Activated CD8-positive, alpha-beta T cell treated with anti-CD3 and anti-CD28 coated beads for 36 hours (primary cell): ENCODE measurements at regions of chr1 and their contacts with region 1.

Region 1: GRCh38 chr1:148334339-148335130 is 148.6 kb downstream of the PPIAL4G start:
- DNase-seq: peak; percentile 87
- ATAC-seq: peak; percentile 86
- H3K4me3 Mint-ChIP-seq: peak overlapping the region; percentile 85
- H3K27ac Mint-ChIP-seq: peak overlapping the region; percentile 100
- H3K4me1 Mint-ChIP-seq: peaks cover 28% of the 10 kb centered on the region
- H3K27me3 Mint-ChIP-seq: peaks cover 9% of the 10 kb centered on the region
- CTCF ChIP-seq: no peak

Region 2: DNA sequence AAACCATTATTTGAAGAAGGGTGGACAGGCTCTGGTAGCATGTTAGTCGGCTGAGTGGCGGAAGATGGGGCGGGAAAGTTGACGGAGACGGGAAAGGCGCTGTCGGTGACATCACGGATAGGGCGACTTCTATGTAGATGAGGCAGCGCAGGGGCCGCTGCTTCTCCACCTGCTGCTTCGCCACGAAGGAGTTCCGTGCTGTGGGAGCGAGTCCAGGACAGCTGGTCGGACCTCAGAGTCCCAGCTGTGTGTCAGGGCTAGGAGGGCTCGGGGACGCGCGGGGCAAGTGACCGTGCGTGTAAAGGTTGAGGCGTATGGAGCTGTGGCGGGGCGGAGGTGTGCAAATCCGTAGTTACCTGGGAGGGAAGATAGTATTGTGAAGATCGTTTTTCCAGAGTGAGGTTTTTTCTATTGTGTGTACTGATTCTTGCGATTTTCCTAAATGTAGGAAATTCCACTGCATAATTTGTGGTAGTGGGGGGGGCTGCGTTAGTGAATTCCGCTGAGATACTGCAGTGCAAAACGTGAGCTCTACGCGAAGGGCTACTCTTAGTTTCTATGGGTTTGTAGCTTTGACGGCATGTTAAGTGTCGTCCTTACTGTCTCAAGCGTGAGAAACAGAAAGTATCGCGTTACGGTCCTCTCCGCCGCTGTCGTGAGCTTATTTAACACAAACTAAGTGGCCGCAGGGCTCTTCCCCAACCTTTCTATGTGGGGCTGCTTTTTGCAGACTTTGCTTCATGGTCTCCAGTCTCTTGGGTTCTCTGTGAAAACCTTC is 71.2 kb before region 1 on chr1:
- CTCF ChIA-PET with region 1: interaction called, 6 read pairs
- POLR2A ChIA-PET with region 1: interaction called, 141 read pairs
- intact Hi-C with region 1: loop called (anchors 5 kb)
- DNase-seq: peak; percentile 92
- ATAC-seq: peak; percentile 90
- H3K4me3 Mint-ChIP-seq: peak overlapping the region; percentile 77
- H3K27ac Mint-ChIP-seq: peak overlapping the region; percentile 97
- H3K4me1 Mint-ChIP-seq: peaks cover 18% of the 10 kb centered on the region
- H3K27me3 Mint-ChIP-seq: peaks cover 9% of the 10 kb centered on the region
- CTCF ChIP-seq: no peak

Region 3: GRCh38 chr1:148307583-148308190 is 26.8 kb before region 1 on chr1:
- CTCF ChIA-PET with region 1: interaction called, 3 read pairs
- POLR2A ChIA-PET with region 1: interaction called, 37 read pairs
- intact Hi-C with region 1: no loop called
- DNase-seq: no peak
- ATAC-seq: no peak
- H3K4me3 Mint-ChIP-seq: no peak overlapping the region
- H3K27ac Mint-ChIP-seq: no peak overlapping the region
- H3K4me1 Mint-ChIP-seq: peaks cover 13% of the 10 kb centered on the region
- H3K27me3 Mint-ChIP-seq: peaks cover 60% of the 10 kb centered on the region
- CTCF ChIP-seq: no peak

Region 4: GRCh38 chr1:148347781-148348180 is 13.2 kb after region 1 on chr1:
- CTCF ChIA-PET with region 1: interaction called, 9 read pairs
- POLR2A ChIA-PET with region 1: interaction called, 23 read pairs
- intact Hi-C with region 1: no loop called
- DNase-seq: no peak
- ATAC-seq: no peak
- H3K4me3 Mint-ChIP-seq: no peak overlapping the region
- H3K27ac Mint-ChIP-seq: no peak overlapping the region
- H3K4me1 Mint-ChIP-seq: no peaks in the 10 kb centered on the region
- H3K27me3 Mint-ChIP-seq: peaks cover 28% of the 10 kb centered on the region
- CTCF ChIP-seq: no peak

Region 5: GRCh38 chr1:148362626-148363438 is 28.3 kb after region 1 on chr1:
- CTCF ChIA-PET with region 1: no interaction called
- POLR2A ChIA-PET with region 1: interaction called, 24 read pairs
- intact Hi-C with region 1: no loop called
- DNase-seq: peak; percentile 65
- ATAC-seq: peak; percentile 60
- H3K4me3 Mint-ChIP-seq: peak overlapping the region; percentile 67
- H3K27ac Mint-ChIP-seq: peak overlapping the region; percentile 59
- H3K4me1 Mint-ChIP-seq: peaks cover 49% of the 10 kb centered on the region
- H3K27me3 Mint-ChIP-seq: peaks cover 7% of the 10 kb centered on the region
- CTCF ChIP-seq: no peak

Region 6: DNA sequence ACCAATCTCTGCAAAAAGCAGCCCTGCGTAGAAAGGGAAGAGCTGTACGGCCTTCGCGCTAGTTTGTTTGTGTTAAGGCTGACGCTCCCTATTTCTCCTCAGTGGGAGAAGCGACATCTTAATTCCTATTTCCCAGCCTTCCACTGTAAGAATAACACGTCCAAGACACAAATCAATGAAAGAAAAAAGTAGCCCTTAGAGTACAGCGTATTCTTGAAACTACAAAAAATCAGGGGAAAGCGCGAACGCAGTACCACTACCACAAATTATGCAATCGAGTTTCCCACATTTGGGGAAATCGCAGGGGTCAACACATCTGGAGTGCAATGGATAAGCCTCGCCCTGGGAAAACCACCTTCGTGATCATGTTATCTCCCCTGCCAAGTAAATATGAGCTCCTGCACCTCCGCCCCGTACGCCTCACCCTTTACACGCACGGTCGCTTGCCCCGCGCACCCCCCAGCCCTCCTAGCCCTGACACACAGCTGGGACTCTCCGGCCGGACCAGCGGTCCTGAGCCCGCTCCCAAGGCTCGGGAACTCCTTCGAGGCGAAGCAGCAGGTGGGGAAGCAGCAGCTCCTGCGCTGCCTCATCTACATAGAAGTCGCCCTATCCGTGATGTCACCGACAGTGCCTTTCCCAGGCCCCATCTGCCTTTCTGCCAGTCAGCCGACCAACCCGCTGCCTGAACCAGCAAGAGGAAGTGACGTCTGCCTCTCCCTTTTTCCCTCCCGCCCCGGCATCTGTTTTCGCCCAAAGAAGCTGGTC is 53.9 kb after region 1 on chr1:
- CTCF ChIA-PET with region 1: no interaction called
- POLR2A ChIA-PET with region 1: interaction called, 19 read pairs
- intact Hi-C with region 1: no loop called
- DNase-seq: peak; percentile 95
- ATAC-seq: peak; percentile 86
- H3K4me3 Mint-ChIP-seq: peak overlapping the region; percentile 84
- H3K27ac Mint-ChIP-seq: peak overlapping the region; percentile 99
- H3K4me1 Mint-ChIP-seq: peaks cover 30% of the 10 kb centered on the region
- H3K27me3 Mint-ChIP-seq: no peaks in the 10 kb centered on the region
- CTCF ChIP-seq: no peak